SK-N-SH (cell line): ENCODE measurements at regions of chr2 and their contacts with region 1.

Region 1: DNA sequence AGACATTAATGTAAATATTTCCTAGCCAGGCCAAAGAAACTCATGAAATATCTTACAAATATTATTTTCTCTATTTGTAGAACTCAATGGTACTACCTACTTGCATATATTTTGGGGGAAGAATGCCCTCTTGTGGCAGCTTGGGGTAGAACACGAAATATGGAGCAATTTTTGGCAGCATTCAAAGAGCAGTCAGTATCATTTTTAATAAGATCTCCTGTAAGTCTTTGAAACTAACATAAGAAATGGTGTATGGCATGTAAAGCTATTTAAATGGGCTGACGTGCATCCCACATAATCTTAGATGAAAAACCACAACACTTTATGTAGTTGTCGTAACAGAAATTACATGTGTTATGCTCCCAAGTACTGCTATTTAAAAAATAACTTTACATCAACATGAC is 62.3 kb upstream of the CCDC195 start:
- DNase-seq: peak; percentile 55
- H3K4me3 ChIP-seq: peak overlapping the region in 1 of 2 experiments; percentile 36; a peak in 1 of 4 replicates
- H3K27ac ChIP-seq: no peak overlapping the region
- H3K4me1 ChIP-seq: no peaks in the 10 kb centered on the region
- H3K27me3 ChIP-seq: no peaks in the 10 kb centered on the region
- CTCF ChIP-seq: peak; percentile 93
- EP300 ChIP-seq: no peak
- RAD21 ChIP-seq: peak; percentile 81

Region 2: GRCh38 chr2:224286923-224287322 is 491.6 kb before region 1 on chr2:
- CTCF ChIA-PET with region 1: no interaction called
- POLR2A ChIA-PET with region 1: no interaction called
- DNase-seq: no peak
- H3K4me3 ChIP-seq: no peak overlapping the region
- H3K27ac ChIP-seq: no peak overlapping the region
- H3K4me1 ChIP-seq: peaks cover 0 to 2% of the 10 kb centered on the region in 2 experiments; a peak in 1 of 4 replicates
- H3K27me3 ChIP-seq: no peaks in the 10 kb centered on the region
- CTCF ChIP-seq: peak; percentile 17; the same call in 1 of the 2 replicates
- EP300 ChIP-seq: no peak
- RAD21 ChIP-seq: no peak

Region 3: DNA sequence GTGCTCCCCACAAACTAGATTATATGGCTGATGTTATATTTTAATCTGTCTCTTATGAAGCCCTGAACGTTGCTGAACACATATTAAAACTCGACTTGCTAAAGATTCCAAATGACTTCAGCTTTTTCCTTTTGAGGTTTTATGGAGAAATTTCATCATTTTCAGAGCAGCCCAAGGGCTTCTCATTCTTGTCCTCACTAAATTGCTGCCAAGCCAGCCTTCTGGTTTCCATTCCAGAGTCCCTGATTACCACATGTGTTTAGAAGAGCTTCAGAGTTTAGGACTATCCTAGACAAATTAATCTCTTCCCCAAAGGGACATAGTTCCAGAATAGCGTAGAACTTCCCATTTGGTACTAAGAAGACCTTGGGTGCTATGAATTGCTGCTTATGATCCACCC is 15.5 kb after region 1 on chr2:
- CTCF ChIA-PET with region 1: interaction called, 27 read pairs
- POLR2A ChIA-PET with region 1: no interaction called
- DNase-seq: no peak
- H3K4me3 ChIP-seq: no peak overlapping the region
- H3K27ac ChIP-seq: no peak overlapping the region
- H3K4me1 ChIP-seq: no peaks in the 10 kb centered on the region
- H3K27me3 ChIP-seq: no peaks in the 10 kb centered on the region
- CTCF ChIP-seq: no peak
- EP300 ChIP-seq: no peak
- RAD21 ChIP-seq: no peak

Region 4: DNA sequence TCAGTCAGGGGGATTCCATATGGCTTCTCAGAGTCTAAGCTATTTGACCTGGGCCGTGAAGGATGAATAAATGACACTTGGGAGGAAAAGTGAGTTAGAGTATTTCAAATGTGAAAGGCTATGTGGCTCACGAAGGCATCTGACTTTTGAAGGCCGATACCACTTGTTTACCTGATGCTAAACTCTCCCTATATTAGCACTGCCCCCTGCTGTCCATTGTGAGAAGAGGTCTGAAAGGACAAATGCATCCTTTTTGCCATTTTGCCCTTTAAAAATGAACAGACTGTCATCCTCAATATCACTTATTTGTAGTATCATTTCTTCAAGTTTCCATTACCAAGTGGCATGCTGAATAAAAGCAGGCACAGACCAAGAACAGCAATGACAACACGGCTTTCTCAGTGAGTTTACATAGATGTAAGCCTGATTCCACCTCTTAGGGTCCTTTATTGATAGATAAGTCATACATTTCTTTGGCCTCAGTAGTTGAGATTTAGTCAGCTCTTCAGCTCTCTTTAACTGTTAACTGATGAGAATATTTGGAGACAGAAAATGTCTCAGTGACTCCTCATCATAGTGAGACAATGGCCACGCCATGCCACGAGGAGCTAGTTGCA is 223.7 kb after region 1 on chr2:
- CTCF ChIA-PET with region 1: interaction called, 22 read pairs
- POLR2A ChIA-PET with region 1: no interaction called
- DNase-seq: peak; percentile 42
- H3K4me3 ChIP-seq: peak overlapping the region in 1 of 2 experiments; percentile 6; a peak in 1 of 4 replicates
- H3K27ac ChIP-seq: no peak overlapping the region
- H3K4me1 ChIP-seq: peaks cover 0 to 4% of the 10 kb centered on the region in 2 experiments; a peak in 2 of 4 replicates
- H3K27me3 ChIP-seq: no peaks in the 10 kb centered on the region
- CTCF ChIP-seq: peak; percentile 86
- EP300 ChIP-seq: no peak
- RAD21 ChIP-seq: peak; percentile 95